Naive thymus-derived CD8-positive, alpha-beta T cell (primary cell): ENCODE measurements at regions of chr7 and their contacts with region 1.

Region 1: DNA sequence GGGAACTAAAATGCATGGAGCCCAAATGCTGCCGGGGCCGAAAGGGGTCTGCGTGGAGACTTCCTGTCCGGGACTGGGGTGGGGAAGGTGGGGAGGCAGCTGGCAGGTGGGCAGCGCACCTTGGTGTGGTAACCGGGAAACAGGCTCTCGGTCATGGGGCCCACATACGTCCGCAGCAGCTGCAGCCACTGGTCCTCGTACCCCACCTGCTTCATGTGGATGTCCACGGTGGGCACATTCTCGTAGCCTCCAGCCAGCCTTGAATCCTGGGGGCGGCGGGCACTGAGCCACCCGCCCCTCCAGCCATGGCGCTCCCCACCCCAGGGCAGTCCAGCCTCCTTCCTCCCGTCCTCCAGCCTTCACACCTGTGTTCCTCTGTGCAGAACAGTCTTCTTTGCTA is 6.6 kb upstream of the MOGAT3 start:
- DNase-seq: no peak
- ATAC-seq: no peak
- H3K4me3 Mint-ChIP-seq: no peak overlapping the region
- H3K27ac Mint-ChIP-seq: peak overlapping the region in 3 of 10 donors; percentile 14 to 75 (median 62)
- H3K4me1 Mint-ChIP-seq: peaks cover 2 to 15% (median 7%) of the 10 kb centered on the region in 4 donors
- H3K27me3 Mint-ChIP-seq: peaks cover 4 to 18% (median 13%) of the 10 kb centered on the region in 5 donors

Region 2: DNA sequence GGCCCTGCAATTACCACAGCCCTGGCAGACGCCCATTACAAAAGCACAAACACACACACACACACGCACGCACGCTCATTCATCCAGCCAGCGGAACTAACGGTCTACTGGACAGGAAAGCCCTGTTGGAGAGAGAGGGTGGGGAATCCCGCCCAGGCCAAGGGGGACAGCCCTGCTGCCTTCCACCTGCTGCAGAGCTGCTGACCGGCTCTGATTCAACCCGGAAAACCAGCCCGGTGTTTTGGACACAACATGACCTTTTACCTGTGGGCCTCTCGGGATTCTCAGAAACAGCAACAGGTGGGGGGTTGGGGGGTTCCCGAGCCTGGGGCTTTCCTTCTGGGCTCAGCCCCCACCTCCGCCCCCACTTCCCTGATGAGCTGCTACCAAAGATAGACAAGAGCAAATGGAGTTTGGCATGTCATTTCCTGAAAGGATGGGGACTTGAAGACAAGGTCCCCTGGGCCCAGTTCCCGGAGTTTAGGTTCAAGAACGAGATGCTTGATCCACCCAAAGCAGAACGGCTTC is 99.1 kb before region 1 on chr7:
- POLR2A ChIA-PET with region 1: no interaction called
- DNase-seq: no peak
- ATAC-seq: no peak
- H3K4me3 Mint-ChIP-seq: no peak overlapping the region
- H3K27ac Mint-ChIP-seq: peak overlapping the region in 1 of 10 donors; percentile 88
- H3K4me1 Mint-ChIP-seq: no peaks in the 10 kb centered on the region
- H3K27me3 Mint-ChIP-seq: peaks cover 13 to 52% (median 16%) of the 10 kb centered on the region in 5 donors

Region 3: DNA sequence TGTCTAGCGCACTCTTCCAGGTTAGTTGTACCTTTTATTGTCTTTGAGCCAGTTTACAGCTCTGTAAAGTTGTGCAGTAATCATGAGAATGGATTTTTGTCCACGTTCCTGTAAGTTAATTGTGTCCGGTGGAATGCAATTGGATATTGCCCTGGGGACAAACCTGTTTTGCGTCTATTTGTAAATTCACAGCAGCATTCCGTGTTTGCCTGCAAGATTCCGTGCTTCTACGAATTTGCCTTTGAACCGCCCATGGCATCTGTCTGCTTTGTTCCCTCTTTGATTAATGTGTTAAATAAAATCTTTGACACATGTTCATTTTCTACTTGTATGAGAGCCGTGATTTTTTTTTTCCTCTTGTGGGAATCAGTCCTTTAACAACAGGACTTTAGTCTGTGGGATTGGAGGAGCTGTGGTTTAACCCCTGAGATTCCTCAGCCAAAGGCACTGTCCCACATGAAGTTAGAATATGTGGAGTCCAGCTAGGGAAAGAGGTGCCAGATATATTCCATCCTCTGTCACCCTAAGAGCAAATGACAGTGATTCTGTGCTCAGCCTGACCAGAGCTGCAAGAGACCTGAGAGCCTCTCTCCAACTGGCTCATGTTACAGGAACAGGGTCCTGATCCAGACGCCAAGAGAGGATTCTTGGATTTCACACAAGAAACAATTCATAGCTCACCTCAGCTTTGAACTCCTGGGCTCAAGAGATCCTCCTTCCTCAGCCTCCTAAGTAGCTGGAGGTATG is 281.5 kb after region 1 on chr7:
- POLR2A ChIA-PET with region 1: interaction called, 10 read pairs
- DNase-seq: peak in 1 of 10 donors; percentile 52
- ATAC-seq: no peak
- H3K4me3 Mint-ChIP-seq: no peak overlapping the region
- H3K27ac Mint-ChIP-seq: no peak overlapping the region
- H3K4me1 Mint-ChIP-seq: no peaks in the 10 kb centered on the region
- H3K27me3 Mint-ChIP-seq: peaks cover 0 to 9% (median 0%) of the 10 kb centered on the region in 5 donors